ENCODE measurements at regions of chr12 and their contacts with region 1.

Region 1: DNA sequence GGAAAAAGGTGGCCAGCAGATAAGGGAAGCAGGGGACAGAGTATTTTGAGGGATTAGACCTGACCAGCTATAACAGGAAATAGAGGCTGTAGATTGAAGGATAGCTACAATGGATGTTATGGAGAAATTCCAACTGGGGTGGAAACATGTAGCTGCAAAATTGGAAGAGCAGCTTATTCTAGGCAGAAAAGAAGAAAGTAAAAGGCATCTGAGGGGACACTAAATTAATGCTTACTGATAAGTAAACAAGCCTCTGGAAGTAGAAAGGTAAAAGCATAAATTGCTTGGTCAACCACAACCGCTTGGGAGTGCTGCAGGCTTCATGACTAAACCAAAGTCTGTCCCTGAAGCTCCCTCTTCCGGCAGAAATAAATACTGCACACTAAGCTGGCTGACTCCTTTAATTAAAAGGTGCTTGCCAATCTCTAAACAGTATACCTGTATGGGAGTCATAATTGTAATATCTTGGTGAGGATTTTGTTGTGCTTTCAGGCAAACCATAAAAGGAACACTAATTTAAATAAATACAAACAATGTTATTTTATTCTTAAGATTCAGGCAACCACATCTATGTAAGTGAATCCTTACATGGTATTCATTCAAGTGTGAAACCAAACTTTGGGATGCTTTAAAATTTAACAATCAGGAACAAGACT is 7.7 kb downstream of the UBC start:
- DNase-seq: no peak
- H3K4me3 ChIP-seq: no peak overlapping the region
- CTCF ChIP-seq: peak; percentile 78

Region 2: DNA sequence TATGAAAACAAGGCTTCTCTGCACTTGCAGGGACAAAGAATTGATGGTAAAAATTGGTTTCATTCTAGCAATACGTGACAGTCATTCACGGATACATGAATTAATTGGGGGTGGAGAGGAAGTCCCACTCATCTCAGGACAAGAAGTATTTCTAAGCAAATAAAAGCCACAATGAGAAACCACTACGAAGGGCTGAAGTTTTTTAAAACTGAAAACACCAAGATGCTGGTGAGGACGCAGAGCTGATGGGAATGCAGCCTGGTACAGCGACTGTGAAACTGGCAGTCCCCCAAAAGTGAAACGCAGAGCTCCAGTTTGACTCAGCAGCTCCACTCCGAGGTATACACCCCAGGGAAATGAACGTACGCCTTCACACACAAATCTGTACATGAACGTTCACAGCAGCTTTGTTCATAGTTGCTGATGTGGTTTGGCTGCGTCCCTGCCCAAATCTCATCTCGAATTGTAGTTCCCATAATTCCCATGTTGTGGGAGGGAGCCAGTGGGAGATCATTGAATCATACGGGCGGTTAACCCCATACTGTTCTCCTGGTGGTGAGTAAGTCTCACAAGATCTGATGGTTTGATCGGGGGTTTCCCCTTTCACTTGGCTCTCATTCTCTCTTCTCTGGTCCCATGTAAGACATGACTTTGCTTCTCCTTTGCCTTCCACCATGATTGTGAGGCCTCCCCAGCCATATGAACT is 132.1 kb before region 1 on chr12:
- CTCF ChIA-PET with region 1: interaction called, 18 read pairs
- POLR2A ChIA-PET with region 1: no interaction called
- DNase-seq: peak; percentile 76
- H3K4me3 ChIP-seq: peak overlapping the region; percentile 38
- CTCF ChIP-seq: no peak

Region 3: GRCh38 chr12:124786061-124786964 is 120.4 kb before region 1 on chr12:
- CTCF ChIA-PET with region 1: interaction called, 19 read pairs
- POLR2A ChIA-PET with region 1: no interaction called
- DNase-seq: peak; percentile 42
- H3K4me3 ChIP-seq: peak overlapping the region; percentile 54
- CTCF ChIP-seq: no peak

Region 4: GRCh38 chr12:124888260-124888659 is 18.5 kb before region 1 on chr12:
- CTCF ChIA-PET with region 1: interaction called, 27 read pairs
- POLR2A ChIA-PET with region 1: no interaction called
- DNase-seq: no peak
- H3K4me3 ChIP-seq: no peak overlapping the region
- CTCF ChIP-seq: no peak

Region 5: DNA sequence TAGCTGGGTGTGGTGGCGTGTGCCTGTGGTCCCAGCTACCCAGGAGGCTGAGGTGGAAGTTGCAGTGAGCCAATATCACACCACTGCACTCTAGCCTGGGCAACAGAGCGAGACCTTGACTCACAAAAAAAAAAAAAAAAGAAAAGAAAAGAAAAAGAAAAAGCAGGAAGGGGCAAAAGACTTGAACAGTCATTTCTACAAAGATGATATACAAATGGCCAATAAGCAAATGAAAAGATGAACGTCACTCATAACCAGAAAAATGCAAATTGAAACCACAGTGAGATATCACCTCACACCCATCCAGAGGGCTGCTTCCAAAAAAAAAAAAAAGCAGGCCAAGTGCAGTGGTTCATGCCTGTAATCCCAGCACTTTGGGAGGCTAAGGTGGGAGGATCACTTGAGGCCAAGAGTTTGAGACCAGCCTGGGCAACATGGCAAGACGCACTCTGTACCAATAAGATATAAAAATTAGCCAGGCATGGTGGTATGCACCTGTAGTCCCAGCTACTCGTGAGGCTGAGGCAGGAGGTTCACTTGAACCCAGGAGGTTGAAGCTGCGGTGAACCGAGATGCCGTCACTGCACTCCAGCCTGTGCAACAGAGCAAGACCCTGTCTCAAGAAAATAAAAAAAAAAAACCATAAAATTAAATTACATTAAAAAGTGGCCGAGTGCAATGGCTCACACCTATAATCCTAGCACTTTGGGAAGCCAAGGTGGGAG is 12.8 kb before region 1 on chr12:
- CTCF ChIA-PET with region 1: interaction called, 28 read pairs
- POLR2A ChIA-PET with region 1: no interaction called
- DNase-seq: no peak
- H3K4me3 ChIP-seq: no peak overlapping the region
- CTCF ChIP-seq: no peak

Region 6: GRCh38 chr12:124917135-124917840 is 10.6 kb after region 1 on chr12:
- CTCF ChIA-PET with region 1: interaction called, 38 read pairs
- POLR2A ChIA-PET with region 1: interaction called, 12 read pairs
- DNase-seq: peak; percentile 98
- H3K4me3 ChIP-seq: peak overlapping the region; percentile 40
- CTCF ChIP-seq: no peak

Region 7: DNA sequence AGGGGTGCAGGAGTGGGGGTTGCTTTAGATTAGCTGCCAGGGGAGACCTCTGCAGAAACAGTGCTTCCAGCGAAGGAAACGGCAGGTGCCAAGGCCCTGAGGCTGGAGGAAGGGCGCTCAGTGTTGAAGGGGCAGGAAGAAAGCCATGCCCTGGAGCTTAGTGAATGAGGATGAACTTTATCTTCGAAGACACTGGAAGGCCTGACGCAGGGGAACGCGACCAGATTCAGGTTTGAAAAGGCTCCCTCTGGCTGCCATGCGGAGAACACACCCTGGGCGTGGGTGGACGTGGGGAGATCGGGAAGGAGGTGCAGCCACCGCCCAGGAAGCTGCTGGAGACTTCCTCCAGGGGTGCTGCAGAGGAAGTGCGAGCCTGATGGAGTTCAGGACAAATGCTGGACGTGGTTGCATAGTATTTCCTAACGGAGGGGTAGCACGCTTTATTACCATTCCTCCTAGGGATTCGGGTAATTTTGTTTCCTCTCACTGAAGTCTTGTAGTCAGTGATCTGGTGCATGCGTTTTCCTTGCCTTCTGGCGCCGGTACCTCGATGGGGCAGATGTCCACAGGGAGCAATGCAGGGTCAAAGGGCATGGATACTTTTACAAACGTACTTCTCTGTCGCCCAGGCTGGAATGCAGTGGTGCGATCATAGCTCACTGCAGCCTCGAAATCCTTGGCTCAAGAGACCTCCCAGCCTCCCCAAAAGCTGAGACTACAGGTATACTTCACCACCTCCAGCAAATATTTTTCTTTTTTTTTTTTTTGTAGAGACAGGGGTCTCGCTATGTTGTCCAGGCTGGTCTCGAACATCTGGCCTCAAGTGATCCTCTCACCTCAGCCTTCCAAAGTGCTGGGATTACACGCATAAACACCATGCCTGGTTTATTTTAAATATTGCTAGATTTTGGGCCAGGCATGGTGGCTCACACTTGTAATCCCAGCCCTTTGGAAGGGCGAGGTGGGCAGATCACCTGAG is 34.1 kb after region 1 on chr12:
- CTCF ChIA-PET with region 1: interaction called, 127 read pairs
- POLR2A ChIA-PET with region 1: interaction called, 11 read pairs
- DNase-seq: no peak
- H3K4me3 ChIP-seq: peak overlapping the region; percentile 45
- CTCF ChIP-seq: peak; percentile 91

Measured in AG04449 (cell line).